ENCODE measurements at regions of chr2 and their contacts with region 1.

Region 1: DNA sequence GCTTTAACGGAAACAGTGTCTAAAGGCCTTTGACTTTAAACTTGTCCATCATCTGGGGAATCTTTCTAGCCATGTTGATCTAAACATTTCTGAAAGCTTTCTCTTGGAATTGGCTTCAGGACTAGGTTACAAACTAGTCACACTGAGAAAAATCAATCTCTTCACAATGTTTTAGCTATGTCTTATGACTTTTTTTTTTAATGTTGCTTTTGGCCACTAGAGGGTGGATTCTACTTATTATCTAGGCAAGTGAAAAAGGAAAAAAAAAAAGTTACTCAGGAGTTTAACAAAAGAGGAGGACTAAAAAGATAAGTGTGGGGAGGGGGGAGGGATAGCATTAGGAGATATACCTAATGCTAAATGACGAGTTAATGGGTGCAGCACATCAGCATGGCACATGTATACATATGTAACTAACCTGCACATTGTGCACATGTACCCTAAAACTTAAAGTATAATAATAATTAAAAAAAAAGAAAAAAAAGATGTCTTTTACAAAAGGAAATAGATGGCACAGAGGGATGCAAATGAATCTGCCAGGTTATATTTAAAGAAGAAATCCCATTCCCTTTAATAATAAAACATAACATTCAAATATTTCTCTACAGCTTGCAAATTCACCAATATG is 160.4 kb upstream of the PID1 start:
- DNase-seq: no peak
- ATAC-seq: no peak
- H3K4me3 ChIP-seq: no peak overlapping the region
- H3K27ac ChIP-seq: no peak overlapping the region
- H3K4me1 ChIP-seq: no peaks in the 10 kb centered on the region
- H3K27me3 ChIP-seq: no peaks in the 10 kb centered on the region
- CTCF ChIP-seq: peak in 2 of 3 experiments; percentile 29 to 30; a peak in 4 of 6 replicates
- EP300 ChIP-seq: no peak
- POLR2A ChIP-seq: no peak
- RAD21 ChIP-seq: peak; percentile 33

Region 2: GRCh38 chr2:229313591-229313990 is 117.8 kb before region 1 on chr2:
- CTCF ChIA-PET with region 1: no interaction called
- POLR2A ChIA-PET with region 1: no interaction called
- RAD21 ChIA-PET with region 1: no interaction called
- SMC1A ChIA-PET with region 1: no interaction called
- in situ Hi-C with region 1: no loop called
- intact Hi-C with region 1: no loop called
- DNase-seq: no peak
- ATAC-seq: no peak
- H3K4me3 ChIP-seq: no peak overlapping the region
- H3K27ac ChIP-seq: no peak overlapping the region
- H3K4me1 ChIP-seq: no peaks in the 10 kb centered on the region
- H3K27me3 ChIP-seq: no peaks in the 10 kb centered on the region
- CTCF ChIP-seq: no peak
- EP300 ChIP-seq: no peak
- POLR2A ChIP-seq: no peak
- RAD21 ChIP-seq: no peak

Region 3: DNA sequence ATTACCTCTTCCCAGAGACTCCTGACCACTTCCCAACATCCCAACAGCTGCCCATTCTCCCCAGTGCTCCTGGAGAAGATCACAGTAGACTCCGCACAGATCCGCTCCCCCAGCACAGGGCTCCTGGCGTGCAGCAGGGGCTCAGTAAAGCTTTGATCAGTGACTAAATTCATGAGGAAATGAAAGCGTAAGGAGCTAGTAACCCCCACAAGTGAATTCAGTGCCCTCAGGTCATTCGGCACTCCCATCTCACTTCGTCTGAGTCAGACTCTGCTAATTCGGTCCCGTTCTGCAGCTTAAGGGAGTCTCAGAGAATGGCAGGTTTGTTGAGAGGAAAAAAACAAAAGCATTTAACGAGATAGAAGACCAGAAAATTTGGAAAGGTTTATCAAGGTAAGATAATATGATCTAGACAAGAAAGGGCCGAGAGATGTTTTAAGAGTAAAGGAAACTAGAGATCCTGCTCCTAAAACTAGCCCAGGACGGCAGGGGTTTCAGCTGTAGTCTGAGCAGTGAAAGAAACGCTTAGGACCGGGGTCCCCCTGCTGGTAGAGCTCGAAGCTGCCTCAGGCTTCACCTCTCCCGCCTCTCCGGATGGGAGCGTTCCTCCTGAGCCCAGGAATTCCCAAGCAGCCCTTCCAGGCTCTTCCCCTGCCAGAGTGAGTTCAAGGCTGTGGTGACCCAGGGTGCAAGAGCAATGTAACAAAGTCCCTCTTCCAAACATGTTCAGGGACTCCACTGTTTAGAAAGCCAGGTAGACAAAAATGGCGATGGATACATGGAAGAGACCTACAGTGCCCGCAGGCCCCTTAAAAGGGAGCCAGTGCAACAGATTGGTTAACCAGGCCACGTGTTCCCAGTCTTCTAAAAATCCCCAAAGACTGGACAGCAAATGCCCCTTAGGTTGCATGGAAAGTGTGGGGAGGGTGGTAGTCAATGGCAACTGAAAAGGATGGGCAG is 155.6 kb after region 1 on chr2:
- CTCF ChIA-PET with region 1: interaction called, 7 read pairs
- POLR2A ChIA-PET with region 1: no interaction called
- RAD21 ChIA-PET with region 1: interaction called, 3 read pairs
- SMC1A ChIA-PET with region 1: interaction called, 8 read pairs
- in situ Hi-C with region 1: no loop called
- intact Hi-C with region 1: loop called (anchors 1 kb)
- DNase-seq: no peak
- ATAC-seq: peak; percentile 92
- H3K4me3 ChIP-seq: no peak overlapping the region
- H3K27ac ChIP-seq: no peak overlapping the region
- H3K4me1 ChIP-seq: no peaks in the 10 kb centered on the region
- H3K27me3 ChIP-seq: no peaks in the 10 kb centered on the region; a peak in 1 of 4 replicates
- CTCF ChIP-seq: peak; percentile 60 to 71 (median 65)
- EP300 ChIP-seq: no peak
- POLR2A ChIP-seq: no peak
- RAD21 ChIP-seq: peak; percentile 56

Region 4: GRCh38 chr2:229715895-229716507 is 284.6 kb after region 1 on chr2:
- CTCF ChIA-PET with region 1: interaction called, 6 read pairs
- POLR2A ChIA-PET with region 1: no interaction called
- RAD21 ChIA-PET with region 1: no interaction called
- SMC1A ChIA-PET with region 1: no interaction called
- in situ Hi-C with region 1: no loop called
- intact Hi-C with region 1: loop called (anchors 1 kb)
- DNase-seq: no peak
- ATAC-seq: peak; percentile 52
- H3K4me3 ChIP-seq: no peak overlapping the region
- H3K27ac ChIP-seq: no peak overlapping the region
- H3K4me1 ChIP-seq: no peaks in the 10 kb centered on the region
- H3K27me3 ChIP-seq: peaks cover 8 to 36% of the 10 kb centered on the region in 2 experiments
- CTCF ChIP-seq: peak; percentile 42 to 50 (median 49); a peak in 5 of 6 replicates
- EP300 ChIP-seq: no peak
- POLR2A ChIP-seq: no peak
- RAD21 ChIP-seq: peak; percentile 43

Region 5: DNA sequence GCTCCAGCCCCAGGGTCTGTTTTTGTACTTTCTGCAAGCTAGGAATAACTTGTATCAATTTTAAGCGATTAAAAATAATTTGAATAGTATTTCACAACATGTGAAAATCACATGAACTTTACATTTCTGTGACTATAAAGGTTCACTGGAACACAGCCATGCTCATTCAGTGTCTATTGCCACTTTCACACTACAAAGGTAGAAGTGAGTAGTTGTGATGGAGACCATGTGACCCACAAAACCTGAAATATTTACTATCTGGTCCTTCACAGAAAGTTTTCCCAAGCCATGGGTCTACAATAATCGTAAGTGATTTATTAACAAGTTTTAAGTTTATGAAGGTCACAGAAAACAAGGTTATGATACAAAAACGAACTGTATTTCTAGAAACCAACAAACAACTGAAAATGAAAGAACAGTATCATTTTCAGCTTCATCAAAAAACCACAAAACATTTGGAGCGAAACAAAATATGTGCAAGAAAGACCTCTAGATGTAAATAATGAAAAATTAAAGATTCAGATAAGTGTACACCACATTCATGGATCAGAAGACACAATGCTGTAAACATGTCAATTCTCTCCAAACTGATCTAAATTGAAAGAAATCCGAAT is 351.8 kb after region 1 on chr2:
- CTCF ChIA-PET with region 1: no interaction called
- POLR2A ChIA-PET with region 1: no interaction called
- RAD21 ChIA-PET with region 1: no interaction called
- SMC1A ChIA-PET with region 1: no interaction called
- in situ Hi-C with region 1: no loop called
- intact Hi-C with region 1: no loop called
- DNase-seq: peak; percentile 34
- ATAC-seq: peak; percentile 75
- H3K4me3 ChIP-seq: peak overlapping the region; percentile 17; the same call in 1 of the 2 replicates
- H3K27ac ChIP-seq: peak overlapping the region; percentile 78
- H3K4me1 ChIP-seq: peaks cover 17% of the 10 kb centered on the region
- H3K27me3 ChIP-seq: no peaks in the 10 kb centered on the region
- CTCF ChIP-seq: no peak
- EP300 ChIP-seq: no peak
- POLR2A ChIP-seq: no peak
- RAD21 ChIP-seq: no peak

Measured in GM12878 (cell line).